Lower leg skin (tissue), 4 donors: ENCODE measurements at regions of chr9 and their contacts with region 1.

Region 1: DNA sequence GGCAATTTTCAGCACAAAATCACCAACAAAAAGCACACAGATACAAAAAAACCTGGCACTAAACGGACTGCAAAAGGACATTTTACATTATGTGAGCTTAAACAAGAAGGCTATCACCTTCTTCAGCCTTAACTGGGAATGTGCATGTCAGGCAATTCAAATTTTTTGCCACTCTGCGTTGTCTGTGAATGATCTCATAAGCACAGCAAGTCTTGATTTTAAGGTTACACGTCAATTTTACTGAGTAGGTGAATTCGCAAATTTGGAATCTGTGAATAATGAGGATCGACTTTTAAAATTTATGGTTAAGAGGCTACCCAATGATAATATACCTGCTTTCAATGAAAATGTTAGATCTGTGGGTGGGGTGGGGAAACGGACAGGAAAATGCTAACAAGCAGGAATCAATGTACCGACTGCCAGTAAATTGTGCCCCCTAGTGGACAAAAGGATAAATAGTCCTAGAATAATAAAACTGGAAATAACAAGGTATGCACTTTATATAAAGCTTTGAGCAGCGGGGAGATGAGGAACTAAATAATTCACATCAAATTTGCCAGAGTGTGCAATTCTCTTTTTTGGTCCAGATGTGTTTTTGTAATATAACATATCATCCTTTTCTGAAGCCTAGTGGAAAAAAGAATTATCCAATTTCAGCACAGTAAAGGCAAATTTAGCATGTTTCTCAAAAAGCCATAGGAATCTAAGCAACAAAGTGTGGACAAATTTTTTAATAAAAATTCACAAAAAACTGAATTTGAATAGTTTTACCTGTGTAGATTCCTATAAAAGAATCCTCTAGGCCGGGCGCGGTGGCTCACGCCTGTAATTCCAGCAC is 20.5 kb downstream of the EQTN start:
- DNase-seq: no peak
- H3K4me3 ChIP-seq: no peak overlapping the region
- CTCF ChIP-seq: no peak
- POLR2A ChIP-seq: no peak

Region 2: DNA sequence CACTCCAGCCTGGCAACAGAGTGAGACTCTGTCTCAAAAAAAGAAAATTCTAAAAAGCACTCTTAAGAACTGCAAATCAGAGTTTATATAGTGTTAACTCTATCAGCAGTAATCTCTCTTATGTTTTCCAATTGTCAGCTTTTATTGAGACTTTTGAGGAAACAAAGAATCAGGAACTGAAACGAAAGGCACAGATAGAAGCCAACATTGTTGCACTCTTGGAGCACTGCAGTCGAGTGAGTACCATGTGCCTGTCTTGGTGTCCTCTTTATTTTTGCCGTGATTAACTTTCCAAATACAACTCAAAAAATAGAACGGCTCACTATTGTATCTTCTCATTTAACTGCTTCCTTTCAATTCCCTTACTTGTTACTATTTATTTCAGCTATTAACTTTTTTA is 229.3 kb before region 1 on chr9:
- intact Hi-C with region 1: loop called (anchors 10 kb)
- DNase-seq: no peak
- H3K4me3 ChIP-seq: no peak overlapping the region
- CTCF ChIP-seq: no peak
- POLR2A ChIP-seq: no peak

Region 3: GRCh38 chr9:27351438-27351837 is 75.0 kb after region 1 on chr9:
- intact Hi-C with region 1: no loop called
- DNase-seq: no peak
- H3K4me3 ChIP-seq: no peak overlapping the region
- CTCF ChIP-seq: no peak
- POLR2A ChIP-seq: no peak

Region 4: DNA sequence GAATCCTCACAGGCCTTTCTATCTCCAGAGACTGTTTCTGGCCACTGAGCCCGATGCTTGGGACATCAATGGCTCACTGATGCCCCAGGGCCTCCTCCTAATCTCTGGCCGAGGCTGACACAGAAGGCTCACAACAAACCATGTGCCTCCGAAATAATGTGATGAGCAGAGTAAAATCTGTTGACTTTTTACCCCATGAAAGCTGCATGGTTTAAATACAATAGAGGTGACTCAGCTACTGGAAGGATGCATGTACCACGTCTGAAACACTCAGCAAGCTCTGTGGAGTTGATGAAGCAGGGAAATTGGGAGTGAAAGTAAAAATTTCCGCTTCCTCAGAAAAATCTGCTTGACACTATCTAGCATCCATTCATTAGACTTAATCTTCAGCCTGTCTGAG is 131.6 kb after region 1 on chr9:
- intact Hi-C with region 1: no loop called
- DNase-seq: no peak
- H3K4me3 ChIP-seq: no peak overlapping the region
- CTCF ChIP-seq: no peak
- POLR2A ChIP-seq: no peak

Region 5: DNA sequence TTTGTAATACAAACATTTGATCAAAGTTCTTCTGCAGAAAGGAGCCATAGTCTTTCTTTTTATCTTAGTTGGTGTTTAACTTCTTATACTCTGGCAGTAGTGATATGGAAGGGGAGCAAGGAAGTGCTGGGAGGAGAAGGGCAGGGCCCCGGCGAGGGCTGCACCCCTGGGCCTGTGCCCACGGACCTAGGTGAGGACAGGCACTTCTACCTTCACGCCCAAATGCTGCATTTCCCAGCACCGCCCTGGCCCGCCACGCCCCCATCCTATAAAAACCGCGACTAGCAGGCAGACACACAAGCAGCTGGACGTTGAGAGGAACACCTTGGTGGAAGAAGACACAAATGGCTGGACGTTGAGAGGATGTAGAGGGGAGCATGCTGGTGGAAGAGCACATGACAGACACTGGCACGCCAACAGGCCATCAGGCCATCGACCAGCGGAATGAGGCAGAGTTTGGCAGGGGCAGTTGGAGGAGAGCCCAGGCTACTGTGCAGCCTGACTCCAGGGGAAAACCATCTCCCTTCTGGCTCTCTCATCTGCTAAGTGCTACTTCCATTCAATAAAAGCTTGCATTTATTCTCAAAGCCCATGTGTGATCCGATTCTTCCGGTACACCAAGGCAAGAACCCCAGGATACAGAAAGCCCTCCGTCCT is 378.3 kb after region 1 on chr9:
- intact Hi-C with region 1: no loop called
- DNase-seq: no peak
- H3K4me3 ChIP-seq: no peak overlapping the region
- CTCF ChIP-seq: no peak
- POLR2A ChIP-seq: no peak